Panc1 (cell line): ENCODE measurements at regions of chr1 and their contacts with region 1.

Region 1: DNA sequence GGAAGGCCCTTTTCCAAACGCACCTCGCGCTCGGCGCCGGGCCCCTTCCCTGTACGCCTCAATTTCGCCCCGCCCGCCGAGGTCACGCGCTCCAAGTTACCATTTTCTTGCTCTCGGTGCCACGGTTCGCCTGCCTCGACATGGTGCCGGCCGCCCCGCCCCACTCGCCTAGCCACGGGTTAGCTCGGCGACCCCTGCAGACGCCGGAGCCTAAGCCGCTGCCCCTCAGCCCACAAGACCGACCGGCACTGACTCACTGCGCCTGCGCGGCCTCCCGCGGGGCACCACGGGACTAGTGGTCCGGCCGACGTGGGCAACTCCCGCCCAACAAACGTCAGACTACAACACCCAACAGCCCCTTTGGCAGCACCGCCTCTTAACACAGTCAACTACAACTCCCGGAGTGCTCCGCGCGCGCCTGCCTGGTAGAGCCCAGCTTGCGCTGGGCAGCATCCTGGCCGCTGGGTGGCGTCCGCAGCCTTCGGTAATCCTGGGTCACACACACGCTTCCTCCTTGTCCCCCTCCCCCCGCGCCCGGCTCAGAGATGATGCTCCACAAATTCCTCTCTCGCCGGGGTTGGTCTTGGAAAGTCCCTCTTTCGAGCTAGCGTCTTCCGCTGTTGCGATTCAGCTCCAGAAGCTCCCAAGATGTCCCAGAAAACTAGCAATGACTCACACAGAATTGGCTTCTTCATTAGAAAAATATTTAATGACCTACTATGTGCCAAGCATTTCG is at the start of gene TRAPPC3:
- DNase-seq: peak; percentile 98
- ATAC-seq: peak; percentile 93
- H3K4me3 ChIP-seq: peak within 1 kb of the TSS; percentile 89 to 98
- H3K27ac ChIP-seq: peak within 1 kb of the TSS; percentile 98
- H3K4me1 ChIP-seq: peaks cover 33% of the 10 kb centered on the region
- H3K27me3 ChIP-seq: no peaks in the 10 kb centered on the region
- CTCF ChIP-seq: peak; percentile 98
- total RNA-seq, gene TRAPPC3: 98.7 TPM

Region 2: GRCh38 chr1:36099681-36100341 is 49.6 kb before region 1 on chr1:
- CTCF ChIA-PET with region 1: interaction called, 11 read pairs
- POLR2A ChIA-PET with region 1: no interaction called
- in situ Hi-C with region 1: no loop called
- intact Hi-C with region 1: no loop called
- DNase-seq: no peak
- ATAC-seq: peak; percentile 95
- H3K4me3 ChIP-seq: peak overlapping the region in 1 of 2 experiments; percentile 52; a peak in 2 of 4 replicates
- H3K27ac ChIP-seq: peak overlapping the region; percentile 63; the same call in 1 of the 2 replicates
- H3K4me1 ChIP-seq: peaks cover 3% of the 10 kb centered on the region; the same call in 1 of the 2 replicates
- H3K27me3 ChIP-seq: no peaks in the 10 kb centered on the region
- CTCF ChIP-seq: peak; percentile 99

Region 3: GRCh38 chr1:36134505-36135329 is 14.7 kb before region 1 on chr1:
- CTCF ChIA-PET with region 1: interaction called, 10 read pairs
- POLR2A ChIA-PET with region 1: interaction called, 3 read pairs
- in situ Hi-C with region 1: no loop called
- intact Hi-C with region 1: no loop called
- DNase-seq: no peak
- ATAC-seq: peak; percentile 80
- H3K4me3 ChIP-seq: no peak overlapping the region
- H3K27ac ChIP-seq: no peak overlapping the region
- H3K4me1 ChIP-seq: peaks cover 3% of the 10 kb centered on the region; the same call in 1 of the 2 replicates
- H3K27me3 ChIP-seq: no peaks in the 10 kb centered on the region
- CTCF ChIP-seq: peak; percentile 87

Region 4: DNA sequence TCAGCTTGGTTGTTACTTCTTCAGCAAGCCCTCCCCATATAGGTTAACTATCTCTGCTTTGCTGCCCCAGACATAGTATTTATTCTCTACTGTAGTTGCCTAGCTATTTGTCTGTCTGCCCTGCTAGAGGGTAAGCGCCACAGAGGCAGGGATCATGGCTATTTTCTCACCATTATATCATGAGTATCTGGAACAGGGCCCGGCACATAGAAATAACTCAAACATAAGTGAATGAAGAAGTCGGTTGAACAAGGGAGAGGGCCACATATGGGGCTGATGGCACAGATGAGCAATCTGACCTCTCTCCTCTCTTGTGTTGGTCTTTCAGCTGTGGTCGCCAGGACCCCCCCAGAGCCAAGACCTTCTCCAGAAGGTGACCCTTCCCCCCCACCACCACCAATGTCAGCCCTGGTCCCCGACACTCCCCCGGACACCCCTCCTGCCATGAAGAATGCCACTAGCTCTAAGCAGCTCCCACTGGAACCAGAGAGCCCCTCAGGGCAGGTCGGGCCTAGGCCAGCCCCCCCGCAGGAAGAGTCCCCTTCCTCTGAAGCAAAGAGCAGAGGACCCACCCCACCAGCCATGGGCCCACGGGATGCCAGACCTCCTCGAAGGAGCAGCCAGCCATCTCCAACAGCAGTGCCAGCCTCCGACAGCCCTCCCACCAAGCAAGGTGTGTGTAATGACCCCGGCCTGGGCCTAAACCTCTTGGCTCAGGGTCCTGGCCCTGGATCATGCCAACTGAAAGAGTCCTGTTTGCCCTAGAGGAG is 21.4 kb after region 1 on chr1:
- CTCF ChIA-PET with region 1: no interaction called
- POLR2A ChIA-PET with region 1: interaction called, 12 read pairs
- in situ Hi-C with region 1: no loop called
- intact Hi-C with region 1: loop called (anchors 1 kb)
- DNase-seq: no peak
- ATAC-seq: no peak
- H3K4me3 ChIP-seq: no peak overlapping the region
- H3K27ac ChIP-seq: no peak overlapping the region
- H3K4me1 ChIP-seq: no peaks in the 10 kb centered on the region
- H3K27me3 ChIP-seq: no peaks in the 10 kb centered on the region
- CTCF ChIP-seq: no peak

Region 5: DNA sequence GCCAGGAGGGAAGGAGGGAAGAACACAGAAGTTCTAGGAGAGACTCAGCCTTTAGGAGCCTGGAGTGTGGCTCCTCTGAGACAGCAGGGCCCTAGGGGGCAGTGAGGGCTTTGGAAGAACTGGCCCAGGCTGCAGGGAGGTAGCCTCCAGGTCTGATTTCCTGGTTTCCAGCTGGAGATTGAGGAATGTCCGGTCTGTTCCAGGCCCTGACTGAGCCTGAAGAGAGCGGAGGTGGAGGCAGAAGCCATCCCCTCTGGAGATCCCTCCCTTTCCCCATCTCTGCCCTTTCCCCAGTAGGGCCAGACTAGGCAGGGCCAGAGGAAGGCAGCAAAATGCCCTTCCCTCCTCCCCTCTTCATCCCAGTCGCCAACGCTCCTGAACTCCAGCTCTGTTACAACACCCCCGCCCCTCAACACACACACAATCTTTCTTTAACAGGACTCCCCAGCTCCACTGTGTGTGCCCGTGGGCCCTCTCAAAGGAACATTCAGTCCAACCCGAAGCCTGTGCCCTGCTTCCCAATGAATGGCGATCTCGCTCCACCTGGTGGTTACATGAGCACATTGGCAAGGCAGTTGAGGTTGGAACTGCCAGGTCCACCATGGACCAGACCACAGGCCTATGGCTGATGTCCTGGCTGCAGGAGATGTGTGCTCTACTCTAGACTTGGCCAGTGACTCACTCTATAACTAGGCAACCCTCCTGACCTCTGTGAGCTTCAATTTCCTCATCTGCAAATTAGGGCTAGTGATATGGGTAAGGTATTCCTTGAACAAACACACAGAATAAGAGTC is 38.6 kb after region 1 on chr1:
- CTCF ChIA-PET with region 1: interaction called, 29 read pairs
- POLR2A ChIA-PET with region 1: interaction called, 5 read pairs
- in situ Hi-C with region 1: no loop called
- intact Hi-C with region 1: loop called (anchors 1 kb)
- DNase-seq: peak; percentile 81
- ATAC-seq: peak; percentile 97
- H3K4me3 ChIP-seq: peak overlapping the region in 1 of 2 experiments; percentile 21; a peak in 1 of 4 replicates
- H3K27ac ChIP-seq: peak overlapping the region; percentile 82
- H3K4me1 ChIP-seq: peaks cover 9% of the 10 kb centered on the region
- H3K27me3 ChIP-seq: no peaks in the 10 kb centered on the region
- CTCF ChIP-seq: peak; percentile 91

Region 6: DNA sequence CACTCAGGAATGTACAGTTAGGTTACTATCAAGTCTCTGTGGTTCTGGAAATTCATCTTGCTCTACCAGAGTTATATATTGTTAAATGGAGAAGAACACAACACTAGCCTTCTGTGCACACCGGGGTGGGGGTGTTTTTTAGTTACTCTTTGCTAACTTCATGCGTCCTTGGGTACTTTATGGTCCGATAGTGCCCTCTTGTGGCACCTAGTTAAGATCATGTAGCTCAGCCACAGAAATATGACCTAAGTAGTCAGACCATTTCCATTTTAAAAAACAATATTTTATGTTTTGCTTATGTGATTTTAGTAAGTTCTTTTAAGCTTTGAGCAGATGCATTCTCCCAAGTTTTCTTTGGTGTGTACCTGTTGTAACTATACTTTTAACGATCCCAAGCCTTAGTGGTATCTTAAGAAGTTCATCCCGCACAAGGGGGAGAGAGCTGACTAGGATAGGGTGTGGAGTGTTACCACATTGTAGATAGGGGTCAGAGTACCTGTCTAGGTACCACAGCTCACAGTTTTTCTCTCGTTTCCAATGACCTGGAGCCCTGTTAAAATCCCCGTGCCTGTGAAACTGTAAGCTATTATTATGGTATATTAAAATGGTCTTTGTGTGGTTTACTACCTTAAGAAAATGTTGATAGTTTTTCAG is 136.2 kb after region 1 on chr1:
- CTCF ChIA-PET with region 1: interaction called, 13 read pairs
- POLR2A ChIA-PET with region 1: interaction called, 6 read pairs
- in situ Hi-C with region 1: no loop called
- intact Hi-C with region 1: loop called (anchors 5 kb)
- DNase-seq: peak; percentile 50
- ATAC-seq: peak; percentile 93
- H3K4me3 ChIP-seq: no peak overlapping the region
- H3K27ac ChIP-seq: no peak overlapping the region
- H3K4me1 ChIP-seq: no peaks in the 10 kb centered on the region; the same call in 1 of the 2 replicates
- H3K27me3 ChIP-seq: no peaks in the 10 kb centered on the region
- CTCF ChIP-seq: peak; percentile 79